ENCODE measurements at regions of chr5 and their contacts with region 1.

Region 1: DNA sequence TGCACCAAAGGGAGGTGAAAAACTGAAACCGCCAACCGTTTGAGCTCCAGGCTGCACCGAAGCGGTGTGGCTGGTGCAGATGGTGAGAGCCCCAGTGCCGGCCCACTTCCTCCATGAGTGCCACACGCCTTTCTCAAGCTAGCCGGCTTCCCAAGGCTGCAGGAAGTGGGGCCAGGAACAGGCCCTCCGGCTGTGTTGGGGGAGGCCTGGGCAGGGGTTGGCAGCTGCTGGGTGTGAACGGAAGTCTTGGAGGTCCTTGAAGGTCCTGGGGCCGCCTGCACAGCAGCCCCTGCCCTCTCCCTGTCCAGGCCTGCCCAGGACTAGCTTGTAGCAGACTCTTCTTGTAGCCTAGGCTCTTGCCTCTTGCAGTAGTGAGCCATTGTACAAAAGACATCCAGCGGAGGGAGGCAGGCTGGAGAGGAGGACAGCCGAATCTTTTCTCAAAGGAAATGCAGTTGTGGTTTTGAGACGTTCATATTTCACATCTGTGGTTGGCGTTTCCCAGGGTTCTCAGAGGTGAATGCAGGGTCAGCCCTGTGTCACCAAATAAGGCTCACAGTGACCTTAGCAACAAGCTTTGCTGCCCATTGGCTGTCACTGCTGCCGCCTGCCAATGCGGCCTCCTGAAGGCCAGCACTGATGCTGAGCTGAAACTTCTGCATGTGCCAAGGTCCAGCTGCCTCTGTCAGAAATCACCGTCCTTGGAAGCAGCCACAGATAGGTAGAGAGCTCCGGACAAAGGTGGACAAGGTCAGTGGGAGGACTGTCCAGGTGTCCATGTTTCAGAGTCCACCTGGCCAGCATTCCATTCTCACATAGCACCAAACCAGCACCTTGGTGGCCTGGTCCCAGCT is 23.9 kb downstream of the IRF1 start:
- DNase-seq: peak; percentile 72
- H3K4me3 Mint-ChIP-seq: peak overlapping the region; percentile 49
- H3K27ac Mint-ChIP-seq: peak overlapping the region; percentile 16
- H3K4me1 Mint-ChIP-seq: peaks cover 74% of the 10 kb centered on the region
- H3K27me3 Mint-ChIP-seq: no peaks in the 10 kb centered on the region

Region 2: GRCh38 chr5:132410451-132411381 is 55.9 kb before region 1 on chr5:
- CTCF ChIA-PET with region 1: interaction called, 10 read pairs
- intact Hi-C with region 1: loop called (anchors 1 kb)
- DNase-seq: peak; percentile 87
- H3K4me3 Mint-ChIP-seq: peak overlapping the region; percentile 90
- H3K27ac Mint-ChIP-seq: peak overlapping the region; percentile 99
- H3K4me1 Mint-ChIP-seq: peaks cover 68% of the 10 kb centered on the region
- H3K27me3 Mint-ChIP-seq: no peaks in the 10 kb centered on the region

Region 3: GRCh38 chr5:132426525-132427138 is 40.0 kb before region 1 on chr5:
- CTCF ChIA-PET with region 1: interaction called, 37 read pairs
- intact Hi-C with region 1: loop called (anchors 1 kb)
- DNase-seq: peak; percentile 83
- H3K4me3 Mint-ChIP-seq: peak overlapping the region; percentile 46
- H3K27ac Mint-ChIP-seq: peak overlapping the region; percentile 95
- H3K4me1 Mint-ChIP-seq: peaks cover 94% of the 10 kb centered on the region
- H3K27me3 Mint-ChIP-seq: no peaks in the 10 kb centered on the region

Region 4: GRCh38 chr5:132456296-132457001 is 10.2 kb before region 1 on chr5:
- CTCF ChIA-PET with region 1: interaction called, 13 read pairs
- intact Hi-C with region 1: loop called (anchors 1 kb)
- DNase-seq: peak; percentile 66
- H3K4me3 Mint-ChIP-seq: peak overlapping the region; percentile 0
- H3K27ac Mint-ChIP-seq: peak overlapping the region; percentile 83
- H3K4me1 Mint-ChIP-seq: peaks cover 84% of the 10 kb centered on the region
- H3K27me3 Mint-ChIP-seq: no peaks in the 10 kb centered on the region

Region 5: GRCh38 chr5:132490486-132491367 is 24.1 kb after region 1 on chr5 and contains the start of gene IRF1:
- CTCF ChIA-PET with region 1: interaction called, 3 read pairs
- intact Hi-C with region 1: loop called (anchors 1 kb)
- DNase-seq: peak; percentile 98
- H3K4me3 Mint-ChIP-seq: peak within 1 kb of the TSS; percentile 91
- H3K27ac Mint-ChIP-seq: peak within 1 kb of the TSS; percentile 97
- H3K4me1 Mint-ChIP-seq: peaks cover 64% of the 10 kb centered on the region
- H3K27me3 Mint-ChIP-seq: no peaks in the 10 kb centered on the region
- total RNA-seq, gene IRF1: 84.3 to 88.4 TPM

Region 6: GRCh38 chr5:132500931-132501630 is 34.4 kb after region 1 on chr5:
- CTCF ChIA-PET with region 1: interaction called, 11 read pairs
- intact Hi-C with region 1: no loop called
- DNase-seq: peak; percentile 86
- H3K4me3 Mint-ChIP-seq: no peak overlapping the region
- H3K27ac Mint-ChIP-seq: no peak overlapping the region
- H3K4me1 Mint-ChIP-seq: peaks cover 19% of the 10 kb centered on the region
- H3K27me3 Mint-ChIP-seq: no peaks in the 10 kb centered on the region

Measured in activated naive CD4-positive, alpha-beta T cell treated with anti-CD3 and anti-CD28 coated beads for 36 hours (primary cell).